WTC11 (cell line): ENCODE measurements at regions of chr3 and their contacts with region 1.

Region 1: GRCh38 chr3:102471001-102471400 is 36.2 kb downstream of the ZPLD1 start:
- DNase-seq: peak; percentile 66
- ATAC-seq: peak; percentile 100
- H3K4me3 Mint-ChIP-seq: no peak overlapping the region
- H3K27ac Mint-ChIP-seq: no peak overlapping the region
- H3K4me1 Mint-ChIP-seq: no peaks in the 10 kb centered on the region
- H3K27me3 Mint-ChIP-seq: no peaks in the 10 kb centered on the region
- CTCF ChIP-seq: peak; percentile 26; the same call in 1 of the 2 replicates

Region 2: DNA sequence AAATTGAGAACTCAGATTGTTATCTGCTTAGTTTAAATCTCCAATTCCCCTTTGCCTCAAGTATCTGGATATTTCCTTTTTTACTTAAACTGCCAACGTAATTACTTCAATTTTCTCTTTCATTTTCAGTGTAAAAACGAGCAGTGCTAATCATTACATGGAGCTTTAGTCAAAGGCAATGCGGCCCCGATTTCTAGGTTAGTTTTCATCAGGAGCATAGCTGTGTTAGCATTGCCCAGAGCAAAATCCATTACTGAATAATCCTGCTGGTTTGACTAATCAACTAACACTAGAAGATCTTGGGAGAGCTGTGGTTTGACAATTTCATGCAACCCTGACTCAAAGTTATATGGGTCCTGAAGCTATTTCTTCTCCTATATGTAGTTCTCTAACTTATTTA is 10.0 kb after region 1 on chr3:
- CTCF ChIA-PET with region 1: interaction called, 21 read pairs
- POLR2A ChIA-PET with region 1: no interaction called
- DNase-seq: no peak
- ATAC-seq: no peak
- H3K4me3 Mint-ChIP-seq: no peak overlapping the region
- H3K27ac Mint-ChIP-seq: no peak overlapping the region
- H3K4me1 Mint-ChIP-seq: peaks cover 38% of the 10 kb centered on the region
- H3K27me3 Mint-ChIP-seq: no peaks in the 10 kb centered on the region
- CTCF ChIP-seq: no peak